A549 (cell line): ENCODE measurements at regions of chr1 and their contacts with region 1.

Region 1: DNA sequence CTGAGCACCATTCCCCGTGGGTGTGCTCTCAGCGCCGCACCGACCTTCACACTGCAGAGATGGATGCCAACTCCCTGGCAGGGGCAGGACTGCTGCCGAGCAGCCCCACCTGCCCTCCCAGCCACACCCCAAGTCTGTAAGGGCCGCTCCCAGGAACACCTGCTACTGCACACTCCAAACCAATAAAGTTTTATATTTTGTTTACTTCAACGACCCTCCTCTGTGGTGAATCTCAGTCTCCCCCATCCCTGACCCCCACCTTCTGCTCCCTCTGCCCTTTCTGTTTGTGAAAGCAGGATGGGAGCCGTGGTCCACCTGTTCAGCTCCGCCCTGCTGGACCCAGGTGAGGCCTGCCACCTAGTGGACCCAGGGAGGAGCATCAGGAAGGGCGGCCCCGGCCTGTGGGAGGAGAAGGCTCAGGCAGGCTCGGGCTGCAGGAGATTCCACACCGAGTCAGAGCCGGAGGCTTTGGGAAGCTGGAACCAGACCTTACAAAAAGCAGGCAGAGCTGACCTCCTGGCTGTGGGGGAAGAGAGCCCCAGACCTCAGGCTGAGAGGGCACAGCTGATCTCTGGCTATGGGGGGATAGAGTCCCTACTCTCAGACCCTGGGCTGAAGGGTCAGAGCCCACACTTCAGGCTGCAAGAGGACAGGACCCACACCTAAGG is 982 bp upstream of the TMEM82 start:
- DNase-seq: peak; percentile 70 to 74
- ATAC-seq: peak; percentile 83 to 93
- H3K4me3 ChIP-seq: no peak overlapping the region
- H3K27ac ChIP-seq: peak overlapping the region; percentile 37 to 77; a peak in 4 of 6 replicates
- H3K4me1 ChIP-seq: peaks cover 6% of the 10 kb centered on the region; the same call in 1 of the 3 replicates
- CTCF ChIP-seq: peak; percentile 65
- EP300 ChIP-seq: no peak
- POLR2A ChIP-seq: no peak
- RAD21 ChIP-seq: peak; percentile 81 to 86

Region 2: GRCh38 chr1:15595809-15596617 is 145.3 kb before region 1 on chr1:
- CTCF ChIA-PET with region 1: interaction called, 19 read pairs
- POLR2A ChIA-PET with region 1: no interaction called
- DNase-seq: no peak
- ATAC-seq: no peak; a peak in 1 of 6 replicates
- H3K4me3 ChIP-seq: no peak overlapping the region
- H3K27ac ChIP-seq: no peak overlapping the region
- H3K4me1 ChIP-seq: 0 out of 3 replicates have a peak, but pooled peaks cover 3% of the 10 kb centered on the region
- CTCF ChIP-seq: no peak
- EP300 ChIP-seq: no peak
- POLR2A ChIP-seq: no peak
- RAD21 ChIP-seq: no peak

Region 3: GRCh38 chr1:15717418-15718125 is 23.7 kb before region 1 on chr1:
- CTCF ChIA-PET with region 1: interaction called, 31 read pairs
- POLR2A ChIA-PET with region 1: no interaction called
- DNase-seq: no peak
- ATAC-seq: no peak
- H3K4me3 ChIP-seq: no peak overlapping the region
- H3K27ac ChIP-seq: no peak overlapping the region
- H3K4me1 ChIP-seq: no peaks in the 10 kb centered on the region
- CTCF ChIP-seq: no peak
- EP300 ChIP-seq: no peak
- POLR2A ChIP-seq: no peak
- RAD21 ChIP-seq: no peak